Mucosa of descending colon (tissue), 3 donors: ENCODE measurements at regions of chr14 and their contacts with region 1.

Region 1: DNA sequence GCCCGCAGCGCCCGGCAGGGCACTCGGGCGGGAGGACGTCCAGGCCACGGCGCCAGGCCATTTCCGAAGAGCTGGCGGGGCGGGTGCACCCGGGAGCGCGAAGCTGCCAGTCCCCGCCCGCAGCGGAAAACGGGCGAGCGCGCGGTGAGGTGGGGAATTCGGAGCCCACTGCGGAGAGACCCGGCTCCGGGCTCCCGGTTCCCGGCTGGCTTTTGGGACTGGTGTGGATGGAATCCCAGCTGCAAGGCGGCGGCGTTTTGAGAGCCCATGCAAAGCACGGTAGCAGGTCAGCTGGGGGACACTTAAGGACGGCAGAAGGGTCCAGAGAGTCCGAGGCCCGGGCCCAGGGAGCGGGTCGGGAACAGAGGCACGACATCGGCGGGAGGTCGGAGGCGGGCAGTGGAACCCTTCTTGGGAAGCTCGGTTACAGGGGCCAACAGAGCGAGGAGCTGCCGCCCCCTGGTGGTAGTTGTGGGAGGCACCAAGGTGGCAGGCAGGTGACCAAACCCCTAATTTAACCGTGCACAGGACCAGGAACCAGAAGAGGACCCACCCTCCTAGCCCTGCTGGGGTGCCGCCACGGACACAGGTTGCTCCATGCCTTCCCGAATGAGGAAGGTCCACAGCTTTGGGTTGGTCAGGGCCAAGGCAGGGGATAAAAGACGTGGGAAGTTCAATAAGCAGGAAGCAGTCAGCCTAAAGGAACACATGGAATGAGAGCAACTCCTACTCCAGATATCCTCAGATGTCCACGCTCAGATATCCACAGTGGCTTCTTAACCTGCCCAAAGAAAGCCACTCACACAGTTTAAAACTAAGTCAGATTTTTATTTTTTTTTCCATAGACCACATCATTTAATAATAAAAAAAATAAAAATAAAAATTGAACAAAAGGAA is 685 bp upstream of the CDH24 start:
- DNase-seq: peak; percentile 91 to 94 (median 93)
- ATAC-seq: peak; percentile 88
- H3K4me3 ChIP-seq: peak overlapping the region; percentile 48
- H3K4me1 ChIP-seq: peaks cover 12% of the 10 kb centered on the region
- CTCF ChIP-seq: peak; percentile 88

Region 2: GRCh38 chr14:22986508-22987054 is 71.4 kb before region 1 on chr14:
- intact Hi-C with region 1: loop called (anchors 1 to 5 kb)
- DNase-seq: peak; percentile 75 to 97 (median 87)
- ATAC-seq: peak; percentile 74
- H3K4me3 ChIP-seq: no peak overlapping the region
- H3K4me1 ChIP-seq: peaks cover 6% of the 10 kb centered on the region
- CTCF ChIP-seq: peak; percentile 71